ENCODE measurements at regions of chr15 and their contacts with region 1.

Region 1: DNA sequence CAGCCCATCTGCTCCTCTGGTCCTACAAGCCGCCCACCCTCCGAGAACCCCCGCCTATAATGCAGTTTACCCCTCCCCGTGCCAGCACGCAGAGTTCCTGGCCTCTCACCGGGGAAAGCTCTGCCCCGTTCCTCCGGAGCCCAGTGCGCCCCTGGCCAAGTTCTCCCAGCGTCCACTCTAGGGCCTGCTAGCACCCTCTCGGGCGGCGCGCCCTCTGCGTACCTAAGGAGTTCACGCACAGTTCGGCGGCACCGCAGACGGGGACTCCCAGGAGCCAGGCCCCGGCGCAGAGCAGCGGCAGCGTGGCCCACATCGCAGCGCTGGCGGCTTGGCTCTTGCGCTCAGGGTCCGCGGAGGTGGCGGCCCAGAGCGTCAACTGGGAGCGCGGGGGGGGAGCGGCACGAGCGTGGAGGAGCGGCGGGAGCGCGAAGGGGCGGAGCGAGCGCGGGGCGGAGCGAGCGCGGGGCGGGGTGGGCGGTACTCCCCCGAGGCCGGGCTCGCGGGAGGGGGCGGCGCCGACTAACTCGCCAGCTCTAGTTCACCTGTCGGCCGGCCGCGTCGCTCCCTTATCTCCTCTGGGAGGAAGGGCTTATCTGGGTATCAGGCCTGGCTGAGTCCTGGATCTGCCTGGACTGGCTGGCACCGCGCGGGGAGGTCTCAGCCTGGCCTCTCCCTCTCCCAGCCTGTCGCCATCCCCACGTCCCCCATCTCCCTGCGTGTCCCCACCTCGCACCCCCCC is at the start of gene CTSH:
- DNase-seq: peak; percentile 84
- ATAC-seq: peak; percentile 87
- H3K4me3 ChIP-seq: peak within 1 kb of the TSS; percentile 75 to 93 (median 92)
- H3K27ac ChIP-seq: peak within 1 kb of the TSS; percentile 77
- H3K4me1 ChIP-seq: peaks cover 61% of the 10 kb centered on the region
- H3K27me3 ChIP-seq: no peaks in the 10 kb centered on the region; a peak in 2 of 5 replicates
- CTCF ChIP-seq: peak; percentile 33; the same call in 1 of the 2 replicates
- EP300 ChIP-seq: no peak
- POLR2A ChIP-seq: peak; percentile 42 to 90; a peak in 3 of 4 replicates
- RAD21 ChIP-seq: peak; percentile 46
- total RNA-seq, gene CTSH: 145 and 265 TPM in 2 replicates

Region 2: DNA sequence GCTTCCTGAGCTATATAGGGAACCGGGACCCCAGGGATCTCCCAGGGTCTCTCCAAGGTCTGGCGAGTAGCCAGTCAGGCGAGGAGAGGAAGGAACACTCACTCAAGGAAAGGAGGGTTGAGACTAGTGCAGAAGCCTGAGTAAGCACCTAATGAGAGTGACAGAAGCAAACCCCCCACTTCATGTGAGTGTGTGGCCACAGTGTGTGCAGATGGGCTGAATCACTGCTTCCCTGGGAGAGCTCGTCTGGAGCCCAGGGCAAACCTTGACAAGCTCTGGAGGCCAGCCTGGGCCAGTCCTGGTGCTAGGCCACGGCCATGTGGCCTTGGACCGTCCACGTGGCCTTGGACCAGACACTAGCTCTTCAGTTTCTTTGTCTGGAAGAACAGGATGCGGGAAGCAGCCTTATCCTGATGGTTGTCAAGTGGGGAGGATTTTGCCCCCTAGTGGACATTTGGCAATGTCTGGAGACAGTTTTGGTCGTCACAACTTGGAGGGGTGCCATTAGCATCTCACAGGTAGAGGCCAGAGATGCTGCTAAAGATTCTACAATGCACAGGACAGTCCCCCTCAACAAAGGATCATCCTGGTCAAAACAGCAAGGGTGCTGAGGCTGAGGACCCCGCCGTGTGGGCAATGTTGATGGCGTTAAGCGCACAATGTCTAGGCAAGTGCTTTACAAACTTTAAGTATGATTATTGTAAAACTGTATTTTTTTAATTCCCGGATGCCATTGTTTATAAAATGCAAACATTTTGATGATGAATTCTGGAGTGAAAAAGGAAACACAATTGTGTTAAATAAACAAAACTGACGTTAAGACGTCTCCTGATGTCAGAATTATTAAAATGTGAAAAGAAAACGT is 34.9 kb after region 1 on chr15:
- CTCF ChIA-PET with region 1: no interaction called
- POLR2A ChIA-PET with region 1: interaction called, 15 read pairs
- in situ Hi-C with region 1: no loop called
- intact Hi-C with region 1: no loop called
- DNase-seq: peak; percentile 85
- ATAC-seq: peak; percentile 75
- H3K4me3 ChIP-seq: no peak overlapping the region
- H3K27ac ChIP-seq: no peak overlapping the region
- H3K4me1 ChIP-seq: peaks cover 49% of the 10 kb centered on the region
- H3K27me3 ChIP-seq: no peaks in the 10 kb centered on the region
- CTCF ChIP-seq: peak; percentile 88
- EP300 ChIP-seq: peak in 1 of 2 experiments; percentile 52; a peak in 1 of 4 replicates
- POLR2A ChIP-seq: no peak
- RAD21 ChIP-seq: peak; percentile 81

Region 3: GRCh38 chr15:78996894-78997275 is 52.0 kb after region 1 on chr15:
- CTCF ChIA-PET with region 1: no interaction called
- POLR2A ChIA-PET with region 1: interaction called, 20 read pairs
- in situ Hi-C with region 1: no loop called
- intact Hi-C with region 1: loop called (anchors 10 kb)
- DNase-seq: peak; percentile 87
- ATAC-seq: peak; percentile 37
- H3K4me3 ChIP-seq: peak overlapping the region in 1 of 3 experiments; percentile 24; a peak in 2 of 6 replicates
- H3K27ac ChIP-seq: peak overlapping the region; percentile 60
- H3K4me1 ChIP-seq: peaks cover 70% of the 10 kb centered on the region
- H3K27me3 ChIP-seq: no peaks in the 10 kb centered on the region
- CTCF ChIP-seq: no peak
- EP300 ChIP-seq: peak in 1 of 2 experiments; percentile 75; a peak in 2 of 4 replicates
- POLR2A ChIP-seq: no peak
- RAD21 ChIP-seq: no peak

Region 4: GRCh38 chr15:79004336-79004735 is 59.5 kb after region 1 on chr15:
- CTCF ChIA-PET with region 1: no interaction called
- POLR2A ChIA-PET with region 1: interaction called, 14 read pairs
- in situ Hi-C with region 1: loop called (anchors 5 kb)
- intact Hi-C with region 1: loop called (anchors 10 kb)
- DNase-seq: peak; percentile 62
- ATAC-seq: peak; percentile 36; the same call in 2 of the 3 replicates
- H3K4me3 ChIP-seq: no peak overlapping the region
- H3K27ac ChIP-seq: no peak overlapping the region
- H3K4me1 ChIP-seq: peaks cover 38% of the 10 kb centered on the region
- H3K27me3 ChIP-seq: no peaks in the 10 kb centered on the region
- CTCF ChIP-seq: no peak
- EP300 ChIP-seq: no peak
- POLR2A ChIP-seq: no peak
- RAD21 ChIP-seq: no peak

Region 5: DNA sequence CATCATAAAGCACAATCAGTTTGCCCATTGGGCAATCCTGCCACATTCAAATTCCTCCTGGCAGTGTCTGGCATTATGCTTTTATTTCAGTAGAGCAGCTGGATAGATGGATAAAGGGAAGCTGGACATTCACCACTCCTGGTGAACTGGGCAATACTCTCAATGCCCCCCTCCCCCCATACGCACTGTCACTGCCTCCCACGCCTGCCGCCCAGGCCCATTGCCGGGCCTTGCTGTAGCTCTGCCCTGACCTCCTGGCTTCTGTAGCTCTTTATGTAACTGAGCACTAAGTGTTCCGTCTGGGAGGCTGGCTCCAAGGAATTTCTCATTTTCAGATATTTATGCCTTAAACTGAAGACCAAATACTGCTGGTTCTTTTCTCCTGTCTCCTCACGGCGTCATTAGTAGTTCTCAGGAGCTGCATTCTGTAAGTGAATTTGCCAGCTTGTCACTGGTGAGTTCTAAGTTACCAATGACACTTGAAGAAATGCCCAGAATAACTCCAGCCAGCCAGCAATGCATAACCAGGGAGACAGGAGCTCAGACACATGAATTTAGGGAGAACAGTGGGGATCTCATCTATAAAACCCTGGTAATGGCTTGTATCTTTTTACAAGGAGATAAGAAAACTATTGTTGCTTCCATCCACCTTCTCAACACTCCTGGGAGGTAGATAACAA is 171.3 kb after region 1 on chr15:
- CTCF ChIA-PET with region 1: no interaction called
- POLR2A ChIA-PET with region 1: no interaction called
- in situ Hi-C with region 1: no loop called
- intact Hi-C with region 1: no loop called
- DNase-seq: no peak
- ATAC-seq: no peak
- H3K4me3 ChIP-seq: no peak overlapping the region
- H3K27ac ChIP-seq: no peak overlapping the region
- H3K4me1 ChIP-seq: no peaks in the 10 kb centered on the region
- H3K27me3 ChIP-seq: no peaks in the 10 kb centered on the region; a peak in 2 of 5 replicates
- CTCF ChIP-seq: no peak
- EP300 ChIP-seq: no peak
- POLR2A ChIP-seq: no peak
- RAD21 ChIP-seq: no peak

Measured in HepG2 (cell line).